Stomach (tissue), 19 donors: ENCODE measurements at regions of chr3 and their contacts with region 1.

Region 1: DNA sequence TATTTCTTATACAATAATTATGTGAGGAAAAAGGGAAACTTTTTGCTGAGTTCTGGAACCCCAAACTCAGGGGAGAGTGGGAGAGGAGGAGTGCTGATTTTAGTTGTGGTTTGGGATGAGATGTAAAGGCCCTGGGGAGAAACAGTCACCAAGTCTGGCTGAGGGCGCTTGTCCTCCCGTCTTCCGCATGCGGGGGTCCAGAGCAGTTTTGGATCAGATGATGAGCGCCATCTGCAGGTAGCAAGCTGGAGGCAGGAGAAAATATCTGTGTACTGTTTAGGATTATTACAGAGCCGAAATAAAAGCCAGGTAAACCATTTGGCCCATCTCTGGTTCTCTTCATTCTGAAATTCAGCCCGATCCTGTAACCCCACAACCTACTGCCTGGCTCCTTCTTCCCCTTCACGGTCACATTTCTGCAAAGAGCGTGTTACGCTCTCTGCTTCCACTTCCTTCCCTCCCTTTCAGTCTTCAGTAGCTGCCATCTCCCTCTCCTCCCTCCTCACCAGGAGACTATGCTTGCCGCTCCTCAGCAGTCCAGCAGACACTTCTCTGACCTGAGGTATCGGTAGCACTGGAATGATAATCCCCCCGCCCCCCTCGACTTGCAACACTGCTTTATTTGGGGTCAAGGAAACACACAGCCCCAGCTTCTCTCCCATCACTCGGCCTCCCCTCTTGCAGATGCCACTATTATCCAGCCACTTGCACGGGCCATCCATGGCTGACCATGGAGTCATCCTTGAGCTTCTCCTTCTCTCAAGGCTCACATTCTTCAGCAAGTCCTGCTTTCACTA is 1.4 kb upstream of the PARP14 start:
- DNase-seq: peak; percentile 84 to 93
- H3K4me3 ChIP-seq: peak overlapping the region; percentile 82 to 94 (median 90)
- H3K27ac ChIP-seq: peak overlapping the region; percentile 92 to 98 (median 96)
- H3K4me1 ChIP-seq: peaks cover 24 to 43% (median 34%) of the 10 kb centered on the region in 4 donors
- H3K27me3 ChIP-seq: no peaks in the 10 kb centered on the region
- CTCF ChIP-seq: peak in 5 of 7 experiments; percentile 70 to 85 (median 75)
- EP300 ChIP-seq: no peak
- POLR2A ChIP-seq: no peak

Region 2: GRCh38 chr3:121998030-121998580 is 681.2 kb before region 1 on chr3:
- intact Hi-C with region 1: no loop called
- DNase-seq: peak in 1 of 2 donors; percentile 34
- H3K4me3 ChIP-seq: no peak overlapping the region
- H3K27ac ChIP-seq: peak overlapping the region in 1 of 5 donors; percentile 38
- H3K4me1 ChIP-seq: peaks cover 0 to 7% (median 6%) of the 10 kb centered on the region in 4 donors
- H3K27me3 ChIP-seq: peaks cover 0 to 38% (median 0%) of the 10 kb centered on the region in 3 donors
- CTCF ChIP-seq: no peak
- EP300 ChIP-seq: no peak
- POLR2A ChIP-seq: no peak

Region 3: DNA sequence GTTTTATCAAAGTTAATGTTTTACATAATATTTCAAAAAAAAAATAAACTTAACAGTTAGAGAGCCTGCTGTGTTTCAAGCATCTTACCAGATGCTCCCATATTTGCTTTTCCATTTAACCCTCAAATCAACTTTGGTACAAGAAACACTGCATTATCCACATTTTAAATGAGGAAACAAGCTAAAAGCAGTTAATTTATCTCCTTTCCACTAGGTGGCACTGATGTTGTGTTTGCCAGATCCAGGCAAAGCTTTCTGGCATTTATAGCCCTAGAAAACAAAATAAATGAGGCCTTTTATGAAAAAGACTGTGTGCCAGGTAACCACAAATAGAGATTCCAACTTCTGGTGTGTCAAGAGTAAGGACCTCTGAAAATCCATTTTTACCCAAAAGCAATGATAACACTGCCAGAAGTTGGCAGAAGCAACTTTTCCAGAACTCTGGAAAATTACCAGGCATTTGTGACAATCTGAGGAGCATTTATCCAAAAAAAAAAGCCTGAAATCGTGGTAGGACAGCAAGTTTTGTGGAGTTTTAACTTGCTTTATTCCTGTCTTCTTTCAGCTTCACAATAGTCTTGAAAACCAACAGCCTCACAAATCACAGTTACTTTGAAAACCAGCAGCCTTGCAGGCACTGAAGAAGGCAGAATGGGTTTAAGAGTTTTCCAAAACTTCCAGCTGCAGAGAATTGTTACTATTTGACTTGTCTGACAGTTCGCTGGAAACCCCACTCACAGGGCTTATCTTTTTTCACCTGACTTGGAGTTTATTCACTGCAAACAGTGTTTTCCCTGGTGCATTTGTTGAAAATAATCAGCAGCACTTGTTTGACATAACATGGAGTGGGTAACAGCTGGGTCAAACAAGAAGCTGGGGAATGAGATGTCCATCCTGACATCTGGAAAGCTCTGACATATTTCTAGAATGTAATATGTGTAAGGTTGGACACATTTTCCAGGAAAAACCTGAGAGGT is 286.1 kb before region 1 on chr3:
- intact Hi-C with region 1: loop called (anchors 10 kb)
- DNase-seq: peak in 1 of 2 donors; percentile 66
- H3K4me3 ChIP-seq: no peak overlapping the region
- H3K27ac ChIP-seq: peak overlapping the region in 2 of 5 donors; percentile 24 to 29
- H3K4me1 ChIP-seq: peaks cover 5 to 22% (median 9%) of the 10 kb centered on the region in 4 donors
- H3K27me3 ChIP-seq: no peaks in the 10 kb centered on the region
- CTCF ChIP-seq: peak in 5 of 7 experiments; percentile 39 to 63 (median 55)
- EP300 ChIP-seq: no peak
- POLR2A ChIP-seq: no peak

Region 4: GRCh38 chr3:122415720-122416654 is 263.3 kb before region 1 on chr3 and contains the start of gene WDR5B:
- intact Hi-C with region 1: no loop called
- DNase-seq: peak; percentile 99
- H3K4me3 ChIP-seq: peak within 1 kb of the TSS; percentile 57 to 81 (median 62)
- H3K27ac ChIP-seq: peak within 1 kb of the TSS; percentile 88 to 91 (median 91)
- H3K4me1 ChIP-seq: peaks cover 17 to 51% (median 37%) of the 10 kb centered on the region in 4 donors
- H3K27me3 ChIP-seq: no peaks in the 10 kb centered on the region
- CTCF ChIP-seq: no peak
- EP300 ChIP-seq: no peak
- POLR2A ChIP-seq: peak in 2 of 4 donors; percentile 71 to 79
- total RNA-seq, gene WDR5B: under 0.01 to 4.6 (median 1.0) TPM in 4 of 5 donors, not detected in the other

Region 5: DNA sequence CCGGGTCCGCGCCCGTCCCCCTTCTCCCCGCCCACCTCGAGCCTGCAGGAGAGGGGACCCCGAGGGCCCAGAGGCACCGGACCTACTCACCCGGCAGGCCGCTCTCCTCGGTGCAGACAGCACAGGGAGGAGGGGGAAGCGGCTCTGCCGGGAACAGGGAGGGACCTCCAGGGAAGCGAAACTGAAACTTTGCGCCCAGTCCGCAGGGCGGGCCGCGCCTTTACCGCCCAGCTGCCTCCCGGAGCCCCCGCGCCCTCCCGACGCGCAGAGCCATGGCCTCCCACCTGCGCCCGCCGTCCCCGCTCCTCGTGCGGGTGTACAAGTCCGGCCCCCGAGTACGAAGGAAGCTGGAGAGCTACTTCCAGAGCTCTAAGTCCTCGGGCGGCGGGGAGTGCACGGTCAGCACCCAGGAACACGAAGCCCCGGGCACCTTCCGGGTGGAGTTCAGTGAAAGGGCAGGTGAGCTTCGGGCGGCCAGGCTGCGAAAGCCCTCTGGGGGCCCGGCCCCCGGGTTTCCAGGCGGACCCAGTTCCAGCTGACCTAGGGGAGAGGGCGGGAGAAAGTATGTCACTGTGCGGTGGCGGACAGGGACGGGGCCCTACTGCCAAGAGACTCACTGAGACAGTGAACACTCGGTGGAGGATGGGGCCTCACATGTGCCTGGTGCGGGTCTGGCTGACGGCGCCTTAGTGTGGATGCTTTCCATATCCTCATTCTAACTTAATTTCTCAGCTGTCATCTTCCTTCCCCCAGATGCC is 114.9 kb before region 1 on chr3 and contains the starts of genes DTX3L and PARP9:
- intact Hi-C with region 1: loop called (anchors 5 kb)
- DNase-seq: peak; percentile 85 to 96
- H3K4me3 ChIP-seq: peak within 1 kb of the TSS; percentile 68 to 82 (median 74)
- H3K27ac ChIP-seq: peak within 1 kb of the TSS; percentile 92 to 97 (median 96)
- H3K4me1 ChIP-seq: peaks cover 27 to 79% (median 51%) of the 10 kb centered on the region in 4 donors
- H3K27me3 ChIP-seq: no peaks in the 10 kb centered on the region
- CTCF ChIP-seq: no peak
- EP300 ChIP-seq: peak; percentile 5
- POLR2A ChIP-seq: peak in 1 of 4 donors; percentile 43
- total RNA-seq, gene DTX3L: 5.8 to 29.0 (median 26.1) TPM
- total RNA-seq, gene PARP9: 1.4 to 42.6 (median 23.9) TPM